PC-9 (cell line): ENCODE measurements at regions of chr9 and their contacts with region 1.

Region 1: GRCh38 chr9:132485393-132485792 is 75.4 kb downstream of the CFAP77 start:
- DNase-seq: no peak
- H3K4me3 ChIP-seq: no peak overlapping the region
- H3K27ac ChIP-seq: no peak overlapping the region
- H3K4me1 ChIP-seq: no peaks in the 10 kb centered on the region
- H3K27me3 ChIP-seq: peaks cover 92% of the 10 kb centered on the region
- CTCF ChIP-seq: no peak

Region 2: DNA sequence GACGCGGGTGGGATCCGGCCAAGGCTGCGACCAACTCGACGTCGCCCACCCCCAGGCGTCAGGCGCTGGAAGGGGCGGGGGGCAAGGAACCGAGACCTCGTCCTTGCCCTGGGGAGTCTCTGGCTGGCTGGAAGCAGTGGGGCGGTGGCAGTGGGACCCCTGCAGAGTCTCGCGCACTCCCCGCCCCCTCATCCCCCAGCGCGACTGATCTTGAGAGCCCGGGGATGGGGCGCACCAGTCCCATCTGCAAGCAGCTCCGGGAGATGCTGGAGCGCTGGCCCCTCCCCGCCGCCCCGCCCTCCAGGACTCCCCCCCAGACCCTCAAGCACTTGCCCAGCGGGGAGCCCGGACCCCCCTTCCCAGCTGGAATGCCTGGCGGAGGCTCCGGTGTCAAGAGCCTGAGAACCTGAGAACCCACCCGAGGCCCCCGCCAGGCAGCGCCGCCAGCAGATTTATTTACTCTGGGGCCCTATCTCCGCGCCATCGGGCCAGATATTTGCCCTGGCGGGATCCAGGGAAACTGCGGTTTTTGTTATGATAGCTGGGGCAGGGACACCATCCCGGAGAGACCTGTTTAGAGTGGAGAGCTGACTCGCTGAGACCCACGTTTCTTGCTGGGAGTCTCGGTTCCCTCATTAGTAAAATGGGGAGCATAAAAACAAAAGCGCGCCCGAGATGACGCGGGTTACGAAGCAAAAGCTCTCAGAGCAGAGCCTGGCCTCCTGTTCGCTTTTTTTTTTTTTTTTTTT is 938.9 kb before region 1 on chr9:
- CTCF ChIA-PET with region 1: no interaction called
- POLR2A ChIA-PET with region 1: no interaction called
- intact Hi-C with region 1: no loop called
- DNase-seq: peak; percentile 51 to 69
- H3K4me3 ChIP-seq: peak overlapping the region; percentile 40; the same call in 1 of the 2 replicates
- H3K27ac ChIP-seq: no peak overlapping the region
- H3K4me1 ChIP-seq: peaks cover 21% of the 10 kb centered on the region
- H3K27me3 ChIP-seq: peaks cover 64% of the 10 kb centered on the region
- CTCF ChIP-seq: no peak

Region 3: GRCh38 chr9:132354637-132355355 is 130.6 kb before region 1 on chr9 and contains the start of gene SETX:
- CTCF ChIA-PET with region 1: no interaction called
- POLR2A ChIA-PET with region 1: interaction called, 16 read pairs
- intact Hi-C with region 1: no loop called
- DNase-seq: peak; percentile 87 to 98
- H3K4me3 ChIP-seq: peak within 1 kb of the TSS; percentile 86
- H3K27ac ChIP-seq: peak within 1 kb of the TSS; percentile 58
- H3K4me1 ChIP-seq: peaks cover 9% of the 10 kb centered on the region
- H3K27me3 ChIP-seq: no peaks in the 10 kb centered on the region
- CTCF ChIP-seq: no peak
- total RNA-seq, gene SETX: 21.2 and 23.5 TPM in 2 replicates

Region 4: DNA sequence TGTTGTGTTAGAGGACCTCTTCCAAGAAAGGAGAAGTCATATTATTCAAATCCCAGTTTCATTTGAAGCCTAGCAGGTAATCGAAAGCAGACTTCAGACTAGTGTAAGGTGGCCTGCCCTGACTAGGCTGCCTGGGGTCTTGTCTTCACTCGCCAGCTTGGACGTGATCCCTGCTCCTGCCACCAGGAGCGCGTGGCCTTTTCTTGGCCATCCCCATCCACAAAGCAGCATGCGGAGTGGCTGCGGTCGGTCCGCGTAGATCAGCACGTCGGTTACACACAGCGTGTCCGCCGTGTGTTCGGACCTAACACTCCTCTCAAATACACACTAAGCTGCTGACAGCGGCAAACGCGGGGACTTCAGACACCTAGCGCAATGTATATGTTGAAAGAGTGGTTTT is 38.0 kb before region 1 on chr9:
- CTCF ChIA-PET with region 1: no interaction called
- POLR2A ChIA-PET with region 1: no interaction called
- intact Hi-C with region 1: loop called (anchors 5 kb)
- DNase-seq: no peak
- H3K4me3 ChIP-seq: no peak overlapping the region
- H3K27ac ChIP-seq: no peak overlapping the region
- H3K4me1 ChIP-seq: no peaks in the 10 kb centered on the region
- H3K27me3 ChIP-seq: peaks cover 94% of the 10 kb centered on the region
- CTCF ChIP-seq: no peak